Ovary (tissue), 10 donors: ENCODE measurements at regions of chr7 and their contacts with region 1.

Region 1: DNA sequence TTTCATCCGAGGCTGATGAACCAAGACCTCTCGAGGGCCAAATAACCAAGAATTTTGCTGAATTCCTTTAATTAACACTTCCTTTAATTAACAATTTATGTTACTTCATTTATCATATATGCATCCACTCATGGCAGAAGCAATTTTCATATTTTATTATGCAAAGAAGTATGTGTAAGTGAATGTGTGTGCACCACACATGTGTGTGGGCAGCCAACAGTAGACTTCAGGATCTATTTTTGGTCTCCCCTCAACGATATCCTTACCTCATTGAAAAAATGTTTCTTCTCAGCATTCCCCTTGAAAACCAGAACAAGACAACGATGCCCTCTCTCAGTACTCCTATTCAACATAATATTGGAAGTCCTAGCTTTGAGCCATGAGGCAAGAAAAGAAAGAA is 96.8 kb downstream of the ICA1 start:
- DNase-seq: no peak
- H3K4me3 ChIP-seq: no peak overlapping the region
- H3K27ac ChIP-seq: no peak overlapping the region
- H3K4me1 ChIP-seq: no peaks in the 10 kb centered on the region
- H3K27me3 ChIP-seq: no peaks in the 10 kb centered on the region
- CTCF ChIP-seq: no peak
- EP300 ChIP-seq: no peak
- POLR2A ChIP-seq: no peak

Region 2: GRCh38 chr7:7739204-7740036 is 425.7 kb before region 1 on chr7:
- intact Hi-C with region 1: loop called in 1 of 4 experiments (anchors 5 kb)
- DNase-seq: no peak
- H3K4me3 ChIP-seq: no peak overlapping the region
- H3K27ac ChIP-seq: no peak overlapping the region
- H3K4me1 ChIP-seq: no peaks in the 10 kb centered on the region
- H3K27me3 ChIP-seq: no peaks in the 10 kb centered on the region
- CTCF ChIP-seq: no peak
- EP300 ChIP-seq: no peak
- POLR2A ChIP-seq: no peak